OCI-LY7 (cell line): ENCODE measurements at regions of chr10 and their contacts with region 1.

Region 1: GRCh38 chr10:30359373-30360206 is 10.5 kb upstream of the MTPAP start:
- DNase-seq: peak; percentile 71
- H3K4me3 ChIP-seq: no peak overlapping the region
- H3K27ac ChIP-seq: no peak overlapping the region
- H3K4me1 ChIP-seq: no peaks in the 10 kb centered on the region
- CTCF ChIP-seq: peak; percentile 94

Region 2: GRCh38 chr10:30384701-30385201 is 25.2 kb after region 1 on chr10:
- CTCF ChIA-PET with region 1: interaction called, 5 read pairs
- POLR2A ChIA-PET with region 1: no interaction called
- intact Hi-C with region 1: loop called (anchors 2 kb)
- DNase-seq: peak; percentile 36
- H3K4me3 ChIP-seq: no peak overlapping the region
- H3K27ac ChIP-seq: no peak overlapping the region
- H3K4me1 ChIP-seq: no peaks in the 10 kb centered on the region
- CTCF ChIP-seq: peak; percentile 62

Region 3: GRCh38 chr10:30553018-30553624 is 193.5 kb after region 1 on chr10:
- CTCF ChIA-PET with region 1: no interaction called
- POLR2A ChIA-PET with region 1: no interaction called
- intact Hi-C with region 1: no loop called
- DNase-seq: no peak
- H3K4me3 ChIP-seq: no peak overlapping the region
- H3K27ac ChIP-seq: no peak overlapping the region
- H3K4me1 ChIP-seq: no peaks in the 10 kb centered on the region
- CTCF ChIP-seq: no peak